ENCODE measurements at regions of chr11 and their contacts with region 1.

Region 1: GRCh38 chr11:6402561-6402981 is 12.3 kb downstream of the SMPD1 start:
- DNase-seq: no peak
- H3K4me3 ChIP-seq: no peak overlapping the region
- H3K27ac ChIP-seq: no peak overlapping the region
- H3K4me1 ChIP-seq: peaks cover 8 to 15% (median 10%) of the 10 kb centered on the region in 4 experiments
- H3K27me3 ChIP-seq: no peaks in the 10 kb centered on the region
- CTCF ChIP-seq: no peak
- EP300 ChIP-seq: no peak
- POLR2A ChIP-seq: no peak
- RAD21 ChIP-seq: no peak

Region 2: DNA sequence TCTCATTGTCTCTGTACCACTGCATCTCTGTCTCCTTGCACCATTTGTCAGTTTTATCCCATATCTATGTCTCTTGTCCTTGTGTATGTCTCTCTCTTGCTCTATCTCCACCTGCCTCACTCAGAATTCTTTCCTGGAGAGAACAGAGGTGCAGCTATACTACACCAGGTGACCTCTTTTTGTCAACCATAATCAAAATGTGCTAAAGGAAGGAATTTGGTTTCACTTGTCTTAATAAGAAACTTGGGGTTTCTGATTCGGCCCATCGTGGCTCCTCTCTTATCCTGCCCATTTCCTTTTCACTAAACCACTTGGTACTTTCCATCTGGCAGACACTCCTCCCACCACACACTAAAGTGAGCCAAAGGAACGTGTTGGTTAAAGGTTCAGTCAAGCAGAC is 199.2 kb before region 1 on chr11:
- CTCF ChIA-PET with region 1: no interaction called
- POLR2A ChIA-PET with region 1: no interaction called
- DNase-seq: no peak
- H3K4me3 ChIP-seq: no peak overlapping the region
- H3K27ac ChIP-seq: no peak overlapping the region
- H3K4me1 ChIP-seq: peaks cover 0 to 3% (median 1%) of the 10 kb centered on the region in 4 experiments; a peak in 2 of 7 replicates
- H3K27me3 ChIP-seq: no peaks in the 10 kb centered on the region
- CTCF ChIP-seq: no peak
- EP300 ChIP-seq: no peak
- POLR2A ChIP-seq: no peak
- RAD21 ChIP-seq: no peak

Region 3: GRCh38 chr11:6419009-6419631 is 16.5 kb after region 1 on chr11 and contains the start of gene APBB1:
- CTCF ChIA-PET with region 1: interaction called, 4 read pairs
- POLR2A ChIA-PET with region 1: interaction called, 10 read pairs
- DNase-seq: peak in 1 of 2 experiments; percentile 81
- H3K4me3 ChIP-seq: peak within 1 kb of the TSS; percentile 78 to 97 (median 86)
- H3K27ac ChIP-seq: no peak within 1 kb of the TSS
- H3K4me1 ChIP-seq: peaks cover 2 to 5% (median 4%) of the 10 kb centered on the region in 4 experiments; a peak in 4 of 7 replicates
- H3K27me3 ChIP-seq: peaks cover 1 to 13% (median 7%) of the 10 kb centered on the region in 4 experiments
- CTCF ChIP-seq: no peak
- EP300 ChIP-seq: no peak
- POLR2A ChIP-seq: peak in 1 of 2 experiments; percentile 65; a peak in 2 of 3 replicates
- RAD21 ChIP-seq: no peak
- total RNA-seq, gene APBB1: 23.6 and 23.9 TPM in 2 replicates

Region 4: GRCh38 chr11:6431861-6432260 is 29.3 kb after region 1 on chr11:
- CTCF ChIA-PET with region 1: interaction called, 10 read pairs
- POLR2A ChIA-PET with region 1: interaction called, 7 read pairs
- DNase-seq: no peak
- H3K4me3 ChIP-seq: no peak overlapping the region
- H3K27ac ChIP-seq: no peak overlapping the region
- H3K4me1 ChIP-seq: peaks cover 0 to 3% (median 1%) of the 10 kb centered on the region in 4 experiments; a peak in 2 of 7 replicates
- H3K27me3 ChIP-seq: 0 out of 7 replicates have a peak, but pooled peaks cover 0 to 2% (median 0%) of the 10 kb centered on the region in 4 experiments
- CTCF ChIP-seq: no peak
- EP300 ChIP-seq: no peak
- POLR2A ChIP-seq: no peak
- RAD21 ChIP-seq: no peak